Caco-2 (cell line): ENCODE measurements at regions of chr2 and their contacts with region 1.

Region 1: DNA sequence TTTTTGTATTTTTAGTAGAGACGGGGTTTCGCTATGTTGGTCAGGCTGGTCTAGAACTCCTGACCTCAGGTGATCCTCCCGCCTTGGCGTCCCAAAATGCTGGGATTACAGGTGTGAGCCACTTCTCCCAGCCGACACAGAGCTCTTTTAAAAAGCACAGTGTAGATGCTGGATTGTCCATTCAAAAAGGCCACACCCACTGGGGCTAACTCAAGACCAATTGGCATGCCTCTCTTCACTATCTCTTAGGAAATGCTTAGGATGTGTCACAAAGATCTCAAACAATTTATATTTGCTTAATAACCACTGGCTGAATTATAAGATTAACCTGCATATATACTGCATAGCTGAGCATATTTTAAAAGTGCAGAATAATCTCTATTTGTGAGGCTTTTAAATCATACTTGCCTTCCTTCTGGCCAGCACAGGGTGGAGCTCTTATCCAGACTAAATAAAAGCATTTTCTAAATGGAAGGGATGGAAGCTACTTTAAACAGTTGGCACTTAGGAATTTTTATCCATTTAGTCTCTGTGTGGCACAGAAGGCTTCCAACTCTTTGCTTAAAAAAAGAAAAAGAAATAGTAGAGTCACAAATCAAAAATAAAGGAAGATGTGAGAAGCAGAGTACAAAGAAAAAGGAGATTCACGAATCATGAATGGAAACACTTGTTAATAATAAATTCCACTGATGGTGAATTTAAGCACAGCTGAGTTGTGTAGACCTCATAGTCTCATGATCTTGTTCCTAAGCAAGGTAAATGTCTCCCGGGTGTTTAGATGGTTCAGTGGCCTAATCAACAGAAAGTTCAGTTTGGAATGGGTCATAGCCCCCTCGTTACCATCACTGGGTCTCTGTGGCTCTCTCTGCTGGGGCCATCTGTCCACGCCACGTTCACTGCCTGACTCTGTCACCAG is 22.4 kb downstream of the CRYGD start:
- DNase-seq: peak in 1 of 2 experiments; percentile 50
- H3K4me3 ChIP-seq: no peak overlapping the region
- H3K4me3 Mint-ChIP-seq: no peak overlapping the region
- H3K27ac Mint-ChIP-seq: peak overlapping the region; percentile 23
- H3K4me1 ChIP-seq: no peaks in the 10 kb centered on the region
- H3K4me1 Mint-ChIP-seq: peaks cover 14% of the 10 kb centered on the region
- H3K27me3 ChIP-seq: no peaks in the 10 kb centered on the region
- H3K27me3 Mint-ChIP-seq: no peaks in the 10 kb centered on the region
- CTCF ChIP-seq: peak; percentile 58 to 69

Region 2: DNA sequence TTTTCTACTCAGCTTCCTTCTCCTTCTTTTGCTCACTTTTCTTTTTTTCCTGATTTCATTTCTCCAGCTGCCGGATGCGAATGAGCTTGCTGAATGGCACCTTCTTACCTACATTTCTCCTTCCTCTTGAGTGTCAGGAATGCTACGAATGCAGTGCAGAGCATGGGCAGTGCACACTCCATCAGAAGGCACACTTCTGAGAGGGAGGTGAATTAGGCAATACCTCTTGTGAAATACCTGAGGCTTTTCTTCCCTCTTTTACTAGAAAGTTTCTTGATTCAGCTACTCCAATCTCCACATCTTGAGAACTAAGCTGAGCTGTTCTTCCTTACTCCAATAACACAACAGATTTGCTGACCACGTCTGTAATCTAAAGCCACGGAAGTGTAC is 127.8 kb before region 1 on chr2:
- CTCF ChIA-PET with region 1: no interaction called
- POLR2A ChIA-PET with region 1: no interaction called
- intact Hi-C with region 1: no loop called
- DNase-seq: peak; percentile 58 to 60
- H3K4me3 ChIP-seq: no peak overlapping the region
- H3K4me3 Mint-ChIP-seq: peak overlapping the region; percentile 8
- H3K27ac Mint-ChIP-seq: peak overlapping the region; percentile 29
- H3K4me1 ChIP-seq: peaks cover 38% of the 10 kb centered on the region
- H3K4me1 Mint-ChIP-seq: peaks cover 31% of the 10 kb centered on the region
- H3K27me3 ChIP-seq: no peaks in the 10 kb centered on the region
- H3K27me3 Mint-ChIP-seq: no peaks in the 10 kb centered on the region
- CTCF ChIP-seq: no peak

Region 3: DNA sequence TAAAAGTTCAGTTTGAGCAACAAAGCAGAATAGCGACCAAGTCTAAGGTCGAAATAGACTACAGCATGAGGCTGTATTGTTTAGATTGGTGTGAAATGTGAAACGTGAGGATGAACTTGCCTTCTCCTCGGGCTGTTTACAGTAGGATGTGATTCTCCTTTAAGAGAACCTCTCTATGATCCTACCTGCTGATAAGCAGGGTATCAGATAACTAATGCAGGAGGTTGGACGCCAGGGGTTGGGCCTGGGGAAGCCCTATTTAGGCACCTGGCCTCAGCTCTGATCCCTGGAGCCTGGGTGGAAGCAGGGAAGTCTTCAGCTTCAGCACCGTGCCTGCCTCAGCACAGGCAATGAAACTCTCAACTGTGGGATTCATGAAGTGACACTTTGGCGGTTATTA is 11.0 kb after region 1 on chr2:
- CTCF ChIA-PET with region 1: interaction called, 6 read pairs
- POLR2A ChIA-PET with region 1: no interaction called
- intact Hi-C with region 1: loop called (anchors 2 kb)
- DNase-seq: peak; percentile 74 to 81
- H3K4me3 ChIP-seq: no peak overlapping the region
- H3K4me3 Mint-ChIP-seq: peak overlapping the region; percentile 62
- H3K27ac Mint-ChIP-seq: no peak overlapping the region
- H3K4me1 ChIP-seq: peaks cover 42% of the 10 kb centered on the region
- H3K4me1 Mint-ChIP-seq: peaks cover 24% of the 10 kb centered on the region
- H3K27me3 ChIP-seq: no peaks in the 10 kb centered on the region
- H3K27me3 Mint-ChIP-seq: no peaks in the 10 kb centered on the region
- CTCF ChIP-seq: no peak

Region 4: GRCh38 chr2:208147759-208148158 is 45.8 kb after region 1 on chr2:
- CTCF ChIA-PET with region 1: interaction called, 24 read pairs
- POLR2A ChIA-PET with region 1: no interaction called
- intact Hi-C with region 1: loop called (anchors 1 kb)
- DNase-seq: no peak
- H3K4me3 ChIP-seq: no peak overlapping the region
- H3K4me3 Mint-ChIP-seq: no peak overlapping the region
- H3K27ac Mint-ChIP-seq: no peak overlapping the region
- H3K4me1 ChIP-seq: peaks cover 5% of the 10 kb centered on the region
- H3K4me1 Mint-ChIP-seq: peaks cover 14% of the 10 kb centered on the region
- H3K27me3 ChIP-seq: no peaks in the 10 kb centered on the region
- H3K27me3 Mint-ChIP-seq: no peaks in the 10 kb centered on the region
- CTCF ChIP-seq: peak in 1 of 2 experiments; percentile 0

Region 5: DNA sequence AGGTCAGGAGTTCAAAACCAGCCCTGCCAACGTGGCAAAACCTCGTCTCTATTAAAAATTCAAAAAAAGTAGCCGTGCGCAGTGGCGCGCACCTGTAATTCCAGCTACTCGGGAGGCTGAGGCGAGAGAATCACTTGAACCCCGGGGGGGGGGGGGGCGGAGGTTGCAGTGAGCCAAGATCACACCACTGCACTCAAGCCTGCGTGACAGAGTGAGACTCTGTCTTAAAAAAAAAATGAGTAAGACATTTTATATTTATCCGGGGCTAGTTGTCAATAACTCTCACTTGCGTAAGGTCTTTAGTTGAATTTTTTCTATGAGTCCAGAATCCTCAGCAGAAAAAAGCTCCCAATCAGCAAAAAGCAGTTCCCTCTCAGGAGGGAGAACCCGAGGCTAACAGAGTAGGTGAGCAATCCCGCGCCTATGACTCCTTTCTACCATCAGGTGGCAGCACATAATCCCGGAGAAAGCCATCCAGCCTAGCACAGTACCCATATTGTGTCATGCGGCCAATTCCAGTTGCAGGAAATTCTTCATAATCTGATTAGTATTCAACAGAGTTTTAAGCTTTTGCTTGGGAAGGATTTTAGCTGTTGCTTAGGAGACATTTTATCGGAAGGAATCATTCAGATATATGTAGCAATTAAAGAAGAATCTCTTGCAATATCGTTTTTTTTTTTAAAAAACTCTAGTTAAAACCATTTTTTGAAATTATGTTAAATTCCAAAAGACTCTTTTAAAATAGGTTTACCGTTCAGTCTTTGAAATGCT is 73.3 kb after region 1 on chr2:
- CTCF ChIA-PET with region 1: interaction called, 24 read pairs
- POLR2A ChIA-PET with region 1: no interaction called
- intact Hi-C with region 1: loop called (anchors 1 kb)
- DNase-seq: peak; percentile 82 to 85
- H3K4me3 ChIP-seq: no peak overlapping the region
- H3K4me3 Mint-ChIP-seq: no peak overlapping the region
- H3K27ac Mint-ChIP-seq: no peak overlapping the region
- H3K4me1 ChIP-seq: peaks cover 16% of the 10 kb centered on the region
- H3K4me1 Mint-ChIP-seq: peaks cover 7% of the 10 kb centered on the region
- H3K27me3 ChIP-seq: no peaks in the 10 kb centered on the region
- H3K27me3 Mint-ChIP-seq: no peaks in the 10 kb centered on the region
- CTCF ChIP-seq: peak; percentile 75 to 95

Region 6: GRCh38 chr2:208265801-208266552 is 164.0 kb after region 1 on chr2 and contains the start of gene PIKFYVE:
- CTCF ChIA-PET with region 1: interaction called, 13 read pairs
- POLR2A ChIA-PET with region 1: no interaction called
- intact Hi-C with region 1: no loop called
- DNase-seq: peak; percentile 96 to 98
- H3K4me3 ChIP-seq: peak within 1 kb of the TSS; percentile 71
- H3K4me3 Mint-ChIP-seq: peak within 1 kb of the TSS; percentile 87
- H3K27ac Mint-ChIP-seq: peak within 1 kb of the TSS; percentile 94
- H3K4me1 ChIP-seq: peaks cover 10% of the 10 kb centered on the region; the same call in 1 of the 2 replicates
- H3K4me1 Mint-ChIP-seq: peaks cover 32% of the 10 kb centered on the region
- H3K27me3 ChIP-seq: no peaks in the 10 kb centered on the region
- H3K27me3 Mint-ChIP-seq: no peaks in the 10 kb centered on the region
- CTCF ChIP-seq: no peak
- total RNA-seq, gene PIKFYVE: 27.9 and 31.2 TPM in 2 replicates

Region 7: GRCh38 chr2:208594642-208595385 is 492.8 kb after region 1 on chr2:
- CTCF ChIA-PET with region 1: no interaction called
- POLR2A ChIA-PET with region 1: no interaction called
- intact Hi-C with region 1: no loop called
- DNase-seq: no peak
- H3K4me3 ChIP-seq: no peak overlapping the region
- H3K4me3 Mint-ChIP-seq: peak overlapping the region; percentile 65
- H3K27ac Mint-ChIP-seq: peak overlapping the region; percentile 92
- H3K4me1 ChIP-seq: peaks cover 22% of the 10 kb centered on the region
- H3K4me1 Mint-ChIP-seq: peaks cover 18% of the 10 kb centered on the region
- H3K27me3 ChIP-seq: no peaks in the 10 kb centered on the region
- H3K27me3 Mint-ChIP-seq: no peaks in the 10 kb centered on the region
- CTCF ChIP-seq: no peak